HAP-1 (cell line): ENCODE measurements at regions of chr2 and their contacts with region 1.

Region 1: GRCh38 chr2:197799068-197799467 is 5.3 kb upstream of the PLCL1 start:
- DNase-seq: no peak
- H3K4me3 ChIP-seq: no peak overlapping the region
- H3K4me1 ChIP-seq: no peaks in the 10 kb centered on the region
- H3K27me3 ChIP-seq: peaks cover 16% of the 10 kb centered on the region

Region 2: DNA sequence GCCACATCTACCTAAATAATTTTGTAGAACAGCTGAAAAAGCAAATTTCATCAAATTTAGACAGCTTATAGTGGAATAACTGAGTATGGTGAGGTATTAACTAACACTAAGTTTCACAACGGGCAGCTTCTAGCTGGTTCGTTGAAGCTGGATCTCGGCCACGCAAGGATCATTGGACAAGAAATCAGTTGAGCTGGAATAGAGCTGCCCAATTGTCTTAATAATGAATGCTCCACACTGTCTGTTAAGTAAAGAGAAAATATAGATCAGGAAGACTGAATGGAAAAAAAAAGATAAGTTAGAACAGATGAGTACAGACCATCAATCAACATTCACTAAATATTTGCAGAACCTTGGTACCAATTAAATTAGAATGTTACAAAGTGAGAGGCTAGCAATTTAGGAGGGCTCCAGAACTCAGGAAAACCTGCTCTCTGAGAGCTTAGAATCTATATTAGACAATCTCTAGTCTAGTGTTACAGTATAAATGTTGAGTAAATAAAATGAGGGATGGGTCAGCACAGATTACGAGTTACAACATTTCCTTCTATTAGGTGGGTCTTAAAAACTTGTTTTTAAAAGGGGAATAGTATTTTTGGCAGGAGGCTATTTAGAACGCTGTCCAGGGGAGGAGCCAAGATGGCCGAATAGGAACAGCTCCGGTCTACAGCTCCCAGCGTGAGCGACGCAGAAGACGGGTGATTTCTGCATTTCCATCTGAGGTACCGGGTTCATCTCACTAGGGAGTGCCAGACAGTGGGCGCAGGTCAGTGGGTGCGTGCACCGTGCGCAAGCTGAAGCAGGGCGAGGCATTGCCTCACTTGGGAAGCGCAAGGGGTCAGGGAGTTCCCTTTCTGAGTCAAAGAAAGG is 70.5 kb before region 1 on chr2:
- in situ Hi-C with region 1: no loop called
- DNase-seq: no peak
- H3K4me3 ChIP-seq: no peak overlapping the region
- H3K4me1 ChIP-seq: no peaks in the 10 kb centered on the region
- H3K27me3 ChIP-seq: no peaks in the 10 kb centered on the region

Region 3: DNA sequence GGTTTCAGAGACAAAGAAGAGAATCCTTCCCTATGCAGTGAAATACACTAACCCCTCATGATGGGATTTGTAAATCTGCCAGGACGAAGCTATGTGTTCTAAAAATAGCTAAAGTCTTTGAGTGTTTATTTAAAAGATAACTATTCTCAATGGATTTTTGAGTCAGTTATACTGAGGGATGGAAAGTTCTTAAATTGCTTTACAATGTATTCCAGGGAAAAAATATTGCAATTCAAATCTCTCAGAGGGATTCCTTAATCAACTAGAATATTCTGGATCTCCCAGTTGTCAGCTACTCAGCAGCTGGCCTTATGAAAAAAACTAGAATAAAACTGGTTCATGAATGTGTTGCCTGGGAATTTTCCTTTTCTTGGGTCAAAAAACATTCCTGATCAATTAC is 317.7 kb after region 1 on chr2:
- in situ Hi-C with region 1: no loop called
- DNase-seq: no peak
- H3K4me3 ChIP-seq: no peak overlapping the region
- H3K4me1 ChIP-seq: no peaks in the 10 kb centered on the region
- H3K27me3 ChIP-seq: no peaks in the 10 kb centered on the region

Region 4: GRCh38 chr2:198127627-198128026 is 328.6 kb after region 1 on chr2:
- in situ Hi-C with region 1: loop called (anchors 5 kb)
- DNase-seq: peak; percentile 37 to 49
- H3K4me3 ChIP-seq: no peak overlapping the region
- H3K4me1 ChIP-seq: no peaks in the 10 kb centered on the region
- H3K27me3 ChIP-seq: 0 out of 2 replicates have a peak, but pooled peaks cover 5% of the 10 kb centered on the region